Panc1 (cell line): ENCODE measurements at regions of chr4 and their contacts with region 1.

Region 1: DNA sequence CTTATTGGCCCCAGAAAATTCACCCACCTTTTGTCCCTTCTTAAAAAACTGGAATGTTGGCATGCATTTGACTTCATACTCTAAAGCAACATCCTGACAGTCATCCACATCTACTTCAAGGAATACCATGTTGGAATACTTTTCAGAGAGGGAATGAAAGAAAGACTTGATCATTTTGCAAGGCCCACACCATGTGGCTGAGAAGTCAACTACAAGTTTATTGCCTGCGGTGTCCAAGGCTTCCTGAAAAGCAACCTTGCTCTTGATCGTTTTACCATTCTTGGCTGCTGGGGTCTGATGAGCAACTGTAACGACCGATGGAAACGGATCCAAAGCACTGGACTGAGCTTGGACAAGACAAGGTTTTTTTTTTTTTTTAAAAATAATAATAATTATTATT is 9.3 kb downstream of the SEPTIN11 start:
- DNase-seq: no peak
- ATAC-seq: no peak
- H3K4me3 ChIP-seq: no peak overlapping the region
- H3K27ac ChIP-seq: no peak overlapping the region
- H3K4me1 ChIP-seq: no peaks in the 10 kb centered on the region
- H3K27me3 ChIP-seq: no peaks in the 10 kb centered on the region
- CTCF ChIP-seq: no peak

Region 2: DNA sequence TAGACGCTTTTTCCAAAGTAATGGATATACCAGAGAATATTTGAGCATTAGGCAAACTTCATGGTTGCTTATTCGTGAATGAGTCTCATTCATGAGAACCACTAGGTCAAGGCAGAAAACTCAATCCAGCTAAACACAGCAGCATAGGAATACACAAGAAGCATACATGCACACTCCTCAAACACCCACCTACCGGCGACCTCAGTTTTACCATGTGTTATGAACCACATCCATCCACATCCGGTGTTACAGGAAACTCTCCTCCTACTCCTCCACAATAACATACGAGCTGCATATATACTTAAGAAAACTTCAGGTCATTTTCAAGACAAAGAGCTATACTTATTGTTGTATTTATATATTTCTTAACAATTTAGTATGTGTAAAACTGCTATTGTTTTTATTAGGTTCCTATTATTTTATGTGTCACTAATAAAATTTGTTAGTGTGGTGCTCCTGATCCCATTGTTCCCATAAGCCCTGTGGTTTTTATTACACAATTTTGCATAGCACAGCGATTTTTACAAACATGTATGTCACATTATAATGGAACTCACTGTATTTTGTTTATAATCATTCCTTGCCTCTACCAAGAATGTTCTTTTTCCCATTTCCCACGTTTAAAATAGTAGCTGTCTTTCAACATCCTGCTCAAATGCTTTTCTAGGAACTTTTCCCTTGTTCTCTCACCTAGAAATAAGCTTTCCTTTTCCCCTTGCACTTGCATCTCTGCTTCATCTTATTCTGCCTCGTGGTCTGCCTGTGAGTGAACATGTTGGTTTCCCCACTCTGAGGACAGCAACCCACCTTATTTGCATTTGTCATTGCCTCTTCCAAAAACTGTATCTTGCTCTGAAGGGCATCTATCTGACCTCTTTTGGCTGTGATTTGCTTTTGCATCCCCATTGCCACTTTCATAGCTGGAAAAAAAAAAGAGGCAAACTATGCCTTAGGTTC is 604.1 kb before region 1 on chr4:
- CTCF ChIA-PET with region 1: no interaction called
- POLR2A ChIA-PET with region 1: interaction called, 23 read pairs
- in situ Hi-C with region 1: no loop called
- intact Hi-C with region 1: no loop called
- DNase-seq: no peak
- ATAC-seq: no peak
- H3K4me3 ChIP-seq: no peak overlapping the region
- H3K27ac ChIP-seq: no peak overlapping the region
- H3K4me1 ChIP-seq: no peaks in the 10 kb centered on the region
- H3K27me3 ChIP-seq: peaks cover 2% of the 10 kb centered on the region; the same call in 1 of the 2 replicates
- CTCF ChIP-seq: no peak

Region 3: DNA sequence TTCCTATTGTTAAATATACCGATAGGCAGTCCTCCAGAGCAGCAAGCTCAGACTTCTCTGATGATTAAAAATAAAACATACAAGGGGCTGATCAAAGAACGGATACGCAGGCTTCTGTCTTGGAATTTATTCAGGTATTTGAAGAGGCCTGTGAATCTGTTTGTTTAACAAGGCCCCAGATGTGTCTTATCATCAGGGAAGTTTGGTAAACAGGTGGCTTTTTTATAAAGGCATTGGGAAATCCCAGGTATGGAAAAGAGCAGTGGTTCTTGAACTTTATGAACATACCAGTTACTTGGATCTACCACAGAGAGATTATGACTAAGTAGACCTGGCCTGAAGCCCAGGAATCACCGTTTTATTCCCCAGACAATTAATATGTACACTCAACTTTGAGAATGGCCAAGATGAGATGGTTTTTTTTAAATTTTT is 108.9 kb before region 1 on chr4:
- CTCF ChIA-PET with region 1: no interaction called
- POLR2A ChIA-PET with region 1: no interaction called
- in situ Hi-C with region 1: no loop called
- intact Hi-C with region 1: no loop called
- DNase-seq: no peak
- ATAC-seq: peak; percentile 88
- H3K4me3 ChIP-seq: no peak overlapping the region
- H3K27ac ChIP-seq: 0 out of 2 replicates have a peak overlapping the region, but pooled peaks have one; percentile 59
- H3K4me1 ChIP-seq: peaks cover 3% of the 10 kb centered on the region
- H3K27me3 ChIP-seq: no peaks in the 10 kb centered on the region
- CTCF ChIP-seq: no peak

Region 4: DNA sequence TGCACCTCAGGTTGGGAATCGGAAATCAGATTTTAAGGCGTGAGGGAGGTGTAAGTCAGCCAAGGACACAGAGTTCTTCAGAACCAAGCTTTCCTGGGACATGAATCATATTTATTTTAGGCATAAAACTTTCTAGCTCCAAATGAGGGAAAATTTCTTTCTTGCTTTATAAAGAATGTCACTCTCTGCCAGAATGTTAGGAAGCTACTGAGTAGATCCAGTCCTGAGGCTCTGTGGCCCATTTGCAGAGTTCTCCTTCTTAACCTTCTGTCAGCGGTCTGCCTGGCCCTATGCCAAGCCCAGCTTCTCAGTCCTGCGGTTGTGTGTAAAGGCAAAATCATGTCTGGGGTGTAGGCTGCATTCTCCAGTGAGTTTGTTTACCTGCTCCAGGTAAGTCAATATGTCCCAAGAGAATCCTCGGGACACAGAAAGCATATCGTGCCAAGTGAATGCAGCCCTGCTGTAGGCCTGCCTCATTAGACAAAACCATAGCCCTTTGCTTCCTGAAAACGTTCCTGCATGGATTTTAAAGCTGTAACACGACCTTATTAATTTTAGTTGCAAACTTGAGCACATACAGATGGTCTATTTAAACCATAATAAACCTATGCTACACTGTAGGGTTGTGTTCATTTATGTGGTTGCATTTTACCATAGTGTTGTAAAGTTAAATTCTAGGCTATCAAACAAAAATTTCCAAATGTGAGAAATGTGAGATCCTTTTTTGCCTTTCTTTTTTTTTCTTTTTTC is 146.1 kb after region 1 on chr4:
- CTCF ChIA-PET with region 1: no interaction called
- POLR2A ChIA-PET with region 1: no interaction called
- in situ Hi-C with region 1: no loop called
- intact Hi-C with region 1: no loop called
- DNase-seq: no peak
- ATAC-seq: no peak
- H3K4me3 ChIP-seq: no peak overlapping the region
- H3K27ac ChIP-seq: no peak overlapping the region
- H3K4me1 ChIP-seq: no peaks in the 10 kb centered on the region
- H3K27me3 ChIP-seq: no peaks in the 10 kb centered on the region
- CTCF ChIP-seq: no peak